ENCODE measurements at regions of chr9 and their contacts with region 1.

Region 1: GRCh38 chr9:136619742-136620440 is 42.8 kb upstream of the EGFL7 start:
- DNase-seq: no peak
- H3K4me3 ChIP-seq: no peak overlapping the region
- H3K27ac ChIP-seq: no peak overlapping the region
- H3K4me1 ChIP-seq: peaks cover 65% of the 10 kb centered on the region
- H3K27me3 ChIP-seq: no peaks in the 10 kb centered on the region
- CTCF ChIP-seq: no peak

Region 2: DNA sequence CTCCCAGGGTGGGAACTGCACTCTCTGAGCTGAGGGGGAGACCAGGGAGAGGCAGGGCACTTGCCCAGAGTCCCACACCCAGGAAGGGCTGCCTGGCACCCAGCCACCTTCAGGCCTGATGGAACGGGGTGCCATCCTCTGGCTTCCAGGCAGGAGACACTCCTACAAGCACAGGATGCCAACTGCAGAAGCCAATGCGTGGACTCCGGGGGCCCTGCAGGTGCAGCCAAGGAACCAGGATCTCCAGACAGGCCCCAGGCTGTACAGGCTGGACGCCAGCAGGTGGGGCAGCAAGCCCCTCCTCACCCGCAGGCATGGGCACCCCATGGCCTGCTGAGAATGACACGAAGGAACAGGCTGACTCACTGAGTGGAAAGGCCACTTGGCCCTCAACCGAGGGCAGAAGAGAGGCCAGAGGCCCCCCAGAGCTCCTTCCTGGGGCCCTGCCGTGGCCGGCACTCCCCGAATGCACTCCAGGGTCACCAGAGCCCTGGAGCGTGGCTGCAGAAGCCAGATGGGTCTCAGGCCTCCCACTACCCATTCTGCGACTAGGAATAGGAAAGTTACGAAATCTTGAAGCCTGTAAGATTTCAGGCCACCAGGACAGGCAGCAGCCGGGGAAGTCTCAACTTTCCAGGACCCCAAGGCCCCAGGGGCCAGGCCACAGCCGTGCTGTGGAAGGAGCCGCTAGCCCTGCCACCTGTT is 540.5 kb before region 1 on chr9:
- CTCF ChIA-PET with region 1: no interaction called
- dilution Hi-C with region 1: no loop called
- in situ Hi-C with region 1: no loop called
- intact Hi-C with region 1: no loop called
- DNase-seq: no peak
- H3K4me3 ChIP-seq: no peak overlapping the region
- H3K27ac ChIP-seq: no peak overlapping the region
- H3K4me1 ChIP-seq: peaks cover 11% of the 10 kb centered on the region
- H3K27me3 ChIP-seq: no peaks in the 10 kb centered on the region
- CTCF ChIP-seq: no peak

Region 3: DNA sequence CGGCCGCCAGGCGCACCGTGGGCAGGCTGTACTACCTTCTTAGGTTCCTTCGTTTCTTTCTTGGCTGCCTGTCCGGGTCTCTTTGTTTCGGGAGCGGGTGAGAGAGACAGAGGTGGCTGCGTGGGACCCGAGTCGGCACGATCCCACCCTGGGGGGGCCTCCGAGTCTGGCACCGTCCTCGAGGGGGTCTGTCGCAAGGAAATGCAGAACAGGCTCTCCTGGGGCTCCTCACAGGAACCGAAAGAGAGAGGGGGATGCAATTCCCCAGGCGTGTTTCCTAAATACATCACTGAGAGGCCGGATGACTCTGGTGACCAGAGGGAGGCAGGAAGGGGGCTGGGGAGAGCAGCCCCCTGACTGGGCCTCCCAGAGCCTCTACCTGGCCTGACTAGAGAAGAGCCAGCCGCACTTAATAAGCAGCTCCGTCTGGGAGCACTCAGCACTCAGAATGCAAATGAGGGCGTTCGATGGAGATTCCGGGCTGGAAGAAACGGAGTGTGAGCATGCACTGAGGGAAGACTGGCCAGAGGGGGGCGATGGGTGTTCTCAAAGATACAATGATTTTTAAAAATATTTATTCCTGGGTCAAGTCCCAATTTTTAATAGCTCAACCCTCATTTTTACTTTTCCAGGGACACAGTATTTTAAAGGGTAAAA is 168.5 kb before region 1 on chr9:
- CTCF ChIA-PET with region 1: no interaction called
- dilution Hi-C with region 1: no loop called
- in situ Hi-C with region 1: no loop called
- intact Hi-C with region 1: no loop called
- DNase-seq: no peak
- H3K4me3 ChIP-seq: no peak overlapping the region
- H3K27ac ChIP-seq: no peak overlapping the region
- H3K4me1 ChIP-seq: no peaks in the 10 kb centered on the region
- H3K27me3 ChIP-seq: no peaks in the 10 kb centered on the region
- CTCF ChIP-seq: no peak

Region 4: DNA sequence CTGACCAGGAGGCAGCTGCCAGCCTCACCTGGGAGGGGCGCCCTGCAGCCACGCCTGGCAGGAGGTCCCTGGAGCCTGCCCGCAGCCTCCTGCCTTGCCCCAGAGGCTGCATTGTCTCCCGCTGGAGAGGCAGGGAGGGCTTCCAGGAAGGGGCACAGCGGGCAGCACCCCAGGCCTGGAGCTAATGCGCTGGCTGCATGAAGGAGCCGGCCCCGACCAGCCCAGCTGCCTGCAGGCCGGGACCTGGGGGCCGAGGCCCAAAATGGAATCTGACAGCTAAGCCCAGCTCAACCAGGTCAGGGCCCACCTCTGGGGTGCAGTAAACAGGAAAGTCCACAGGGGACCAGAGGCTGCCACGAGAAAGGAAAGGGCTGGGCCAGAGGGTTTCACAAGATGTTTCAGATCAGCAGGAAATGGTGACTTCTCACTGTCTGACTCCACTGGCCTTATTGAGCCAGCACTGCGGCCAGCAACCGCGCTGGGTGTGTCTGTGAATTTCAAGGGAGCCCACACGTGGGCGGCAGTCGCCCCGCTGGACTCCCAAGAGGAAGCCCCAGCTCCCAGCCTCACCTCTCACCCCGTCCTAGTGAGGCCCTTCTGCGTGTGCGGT is 55.4 kb before region 1 on chr9:
- CTCF ChIA-PET with region 1: no interaction called
- dilution Hi-C with region 1: no loop called
- in situ Hi-C with region 1: loop called in 1 of 2 experiments (anchors 5 kb)
- intact Hi-C with region 1: no loop called
- DNase-seq: peak; percentile 39
- H3K4me3 ChIP-seq: no peak overlapping the region
- H3K27ac ChIP-seq: no peak overlapping the region
- H3K4me1 ChIP-seq: peaks cover 20% of the 10 kb centered on the region
- H3K27me3 ChIP-seq: no peaks in the 10 kb centered on the region
- CTCF ChIP-seq: no peak

Measured in mammary epithelial cell (primary cell).